ENCODE measurements at regions of chr22 and their contacts with region 1.

Region 1: DNA sequence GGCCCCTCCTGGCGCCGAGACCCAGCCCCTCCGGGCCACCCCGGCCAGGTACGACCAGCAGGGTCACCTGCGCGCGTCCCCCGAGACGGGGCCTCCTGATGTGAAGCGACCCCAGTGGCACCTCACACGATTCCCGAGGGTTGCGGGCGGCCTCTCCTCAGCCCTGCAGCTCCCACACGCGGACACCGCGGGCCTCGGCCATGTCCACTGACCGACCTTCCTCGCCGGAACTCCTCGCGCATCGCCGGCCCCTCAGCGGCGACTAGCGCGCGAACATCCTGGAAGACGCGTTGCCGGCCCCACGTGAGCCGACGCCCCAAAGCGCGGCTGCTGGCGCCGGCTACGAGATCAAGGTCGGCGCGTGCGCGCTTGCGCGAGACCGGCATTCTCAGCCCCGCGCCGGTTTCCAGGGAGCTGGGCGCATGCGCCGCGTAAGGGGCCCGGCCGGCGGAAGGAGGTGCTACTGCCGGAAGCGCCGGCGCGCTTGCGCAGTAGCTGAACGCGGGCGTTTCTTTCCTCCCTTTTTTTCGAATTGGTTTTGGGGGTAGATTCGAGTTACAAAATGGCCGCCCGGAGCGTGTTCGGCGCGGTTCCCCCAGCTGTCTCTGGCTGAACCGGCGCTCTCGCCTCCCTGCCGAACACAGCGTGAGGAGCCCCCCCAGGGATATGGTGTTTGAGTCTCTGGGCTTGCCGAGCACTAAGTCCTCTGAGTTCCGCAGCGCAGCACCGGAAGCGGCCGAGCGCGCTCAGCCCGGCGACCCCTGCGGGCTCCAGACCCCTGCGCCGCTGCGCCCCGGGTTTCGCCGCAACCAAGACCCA is at the start of gene NUP50:
- DNase-seq: peak; percentile 98
- H3K4me3 ChIP-seq: peak within 1 kb of the TSS; percentile 91 to 98 (median 98)
- H3K27ac ChIP-seq: peak within 1 kb of the TSS; percentile 85
- H3K4me1 ChIP-seq: peaks cover 36% of the 10 kb centered on the region
- H3K27me3 ChIP-seq: no peaks in the 10 kb centered on the region
- CTCF ChIP-seq: no peak
- POLR2A ChIP-seq: peak; percentile 88
- total RNA-seq, gene NUP50: 84.4 and 90.9 TPM in 2 replicates

Region 2: DNA sequence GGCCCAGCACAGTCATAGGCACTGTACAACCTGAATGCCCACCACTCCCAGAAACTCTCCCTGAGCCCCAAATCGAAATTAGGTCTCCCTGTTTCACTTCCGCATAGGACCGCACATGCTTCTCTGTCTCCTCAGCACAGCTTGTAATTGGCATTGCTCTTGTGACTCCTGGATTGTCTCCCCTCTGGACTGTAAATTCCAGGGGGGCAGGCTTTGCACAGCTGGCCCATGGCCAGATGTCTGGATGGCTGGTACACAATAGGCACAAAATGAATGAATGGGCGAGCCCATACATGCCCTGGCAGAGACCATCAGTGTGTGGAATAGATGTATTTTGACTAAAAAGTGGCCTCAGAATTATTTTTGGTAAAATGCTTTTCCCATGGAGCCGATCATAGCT is 90.6 kb before region 1 on chr22:
- CTCF ChIA-PET with region 1: no interaction called
- POLR2A ChIA-PET with region 1: no interaction called
- dilution Hi-C with region 1: no loop called
- intact Hi-C with region 1: loop called (anchors 1 kb)
- DNase-seq: no peak
- H3K4me3 ChIP-seq: no peak overlapping the region
- H3K27ac ChIP-seq: no peak overlapping the region
- H3K4me1 ChIP-seq: no peaks in the 10 kb centered on the region
- H3K27me3 ChIP-seq: no peaks in the 10 kb centered on the region
- CTCF ChIP-seq: no peak
- POLR2A ChIP-seq: no peak

Region 3: GRCh38 chr22:45101515-45102227 is 62.0 kb before region 1 on chr22:
- CTCF ChIA-PET with region 1: interaction called, 12 read pairs
- POLR2A ChIA-PET with region 1: no interaction called
- dilution Hi-C with region 1: no loop called
- intact Hi-C with region 1: no loop called
- DNase-seq: peak; percentile 30
- H3K4me3 ChIP-seq: no peak overlapping the region
- H3K27ac ChIP-seq: no peak overlapping the region
- H3K4me1 ChIP-seq: no peaks in the 10 kb centered on the region
- H3K27me3 ChIP-seq: peaks cover 0 to 3% of the 10 kb centered on the region in 2 experiments
- CTCF ChIP-seq: peak in 1 of 2 donors; percentile 31
- POLR2A ChIP-seq: no peak

Region 4: GRCh38 chr22:45240810-45241631 is 77.4 kb after region 1 on chr22 and contains the start of gene KIAA0930:
- CTCF ChIA-PET with region 1: interaction called, 5 read pairs
- POLR2A ChIA-PET with region 1: no interaction called
- dilution Hi-C with region 1: no loop called
- intact Hi-C with region 1: loop called (anchors 5 kb)
- DNase-seq: peak; percentile 50
- H3K4me3 ChIP-seq: peak within 1 kb of the TSS; percentile 63 to 70 (median 68)
- H3K27ac ChIP-seq: no peak within 1 kb of the TSS
- H3K4me1 ChIP-seq: peaks cover 12% of the 10 kb centered on the region
- H3K27me3 ChIP-seq: no peaks in the 10 kb centered on the region
- CTCF ChIP-seq: no peak
- POLR2A ChIP-seq: no peak
- total RNA-seq, gene KIAA0930: 37.9 and 43.4 TPM in 2 replicates

Region 5: GRCh38 chr22:45336971-45337431 is 173.3 kb after region 1 on chr22:
- CTCF ChIA-PET with region 1: no interaction called
- POLR2A ChIA-PET with region 1: no interaction called
- dilution Hi-C with region 1: no loop called
- intact Hi-C with region 1: no loop called
- DNase-seq: peak; percentile 100
- H3K4me3 ChIP-seq: no peak overlapping the region
- H3K27ac ChIP-seq: peak overlapping the region; percentile 96
- H3K4me1 ChIP-seq: peaks cover 22% of the 10 kb centered on the region
- H3K27me3 ChIP-seq: no peaks in the 10 kb centered on the region
- CTCF ChIP-seq: no peak
- POLR2A ChIP-seq: no peak